ENCODE measurements at regions of chr5 and their contacts with region 1.

Region 1: DNA sequence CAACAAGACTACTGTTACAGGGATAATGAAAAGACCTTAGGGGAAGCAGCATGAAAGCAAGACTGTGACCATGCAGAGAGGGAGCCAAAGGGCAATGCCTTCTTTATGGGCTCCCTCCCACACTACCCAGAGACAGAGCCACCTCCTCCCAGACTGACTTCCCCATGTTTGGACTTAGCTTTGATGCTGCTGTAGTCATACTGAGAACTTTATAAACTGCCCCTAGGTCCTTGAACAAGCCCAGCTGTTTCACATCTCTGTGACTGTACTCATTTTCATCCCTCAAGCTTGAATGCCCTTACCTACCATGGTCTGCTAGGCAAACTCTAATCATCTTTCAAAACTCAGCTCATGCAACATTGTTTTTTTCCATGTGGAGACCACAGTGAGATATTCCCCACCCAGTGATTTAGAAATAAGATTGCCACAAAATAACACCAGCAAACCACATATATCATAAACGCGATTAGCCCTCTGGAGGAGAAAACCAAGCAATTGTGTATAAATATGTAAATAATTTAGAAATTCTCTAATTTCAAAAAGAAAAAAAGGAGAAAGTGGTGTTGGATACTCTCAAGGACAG is 23.4 kb upstream of the FAM169A start:
- DNase-seq: no peak
- ATAC-seq: peak; percentile 76
- H3K4me3 ChIP-seq: no peak overlapping the region
- H3K27ac ChIP-seq: peak overlapping the region; percentile 38
- H3K4me1 ChIP-seq: peaks cover 35% of the 10 kb centered on the region
- H3K27me3 ChIP-seq: no peaks in the 10 kb centered on the region
- CTCF ChIP-seq: no peak
- EP300 ChIP-seq: no peak
- POLR2A ChIP-seq: no peak
- RAD21 ChIP-seq: no peak

Region 2: DNA sequence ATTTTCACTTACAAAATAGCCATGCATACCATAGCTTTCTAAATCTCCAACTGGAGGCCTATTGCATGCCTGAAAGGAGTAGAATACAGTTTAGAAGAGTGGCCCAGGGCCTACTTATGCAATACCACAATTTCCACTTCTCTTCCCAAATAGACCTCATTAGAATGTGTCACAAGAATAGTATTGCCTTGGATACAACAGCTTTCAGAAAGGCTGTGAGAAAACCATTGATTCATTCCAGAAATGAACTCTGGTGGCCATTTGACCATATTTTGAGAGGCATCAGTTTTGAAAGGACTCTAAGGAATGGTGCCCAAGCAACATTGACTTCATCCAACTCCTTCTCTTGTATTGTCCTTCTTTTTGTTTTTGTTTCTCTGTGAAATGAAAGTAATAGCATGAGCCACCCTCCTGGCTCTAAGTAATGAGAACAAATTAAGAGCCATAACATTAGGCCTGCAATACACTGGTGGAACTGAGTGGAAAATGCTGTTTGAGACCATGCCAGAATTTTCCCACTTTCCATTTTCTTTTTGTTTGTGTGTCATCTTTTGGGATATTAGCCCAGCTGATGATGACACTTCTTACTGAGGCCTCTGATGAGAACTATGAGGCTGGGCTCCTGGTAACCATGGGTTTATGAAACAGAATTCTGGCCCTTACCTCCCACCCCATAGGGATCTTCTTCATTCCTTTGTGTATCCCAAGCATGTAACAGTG is 1626.5 kb before region 1 on chr5:
- CTCF ChIA-PET with region 1: no interaction called
- POLR2A ChIA-PET with region 1: no interaction called
- in situ Hi-C with region 1: no loop called
- intact Hi-C with region 1: no loop called
- DNase-seq: no peak
- ATAC-seq: no peak
- H3K4me3 ChIP-seq: no peak overlapping the region
- H3K27ac ChIP-seq: no peak overlapping the region
- H3K4me1 ChIP-seq: no peaks in the 10 kb centered on the region
- H3K27me3 ChIP-seq: peaks cover 0 to 37% of the 10 kb centered on the region in 2 experiments
- CTCF ChIP-seq: no peak
- EP300 ChIP-seq: no peak
- POLR2A ChIP-seq: no peak
- RAD21 ChIP-seq: no peak

Region 3: DNA sequence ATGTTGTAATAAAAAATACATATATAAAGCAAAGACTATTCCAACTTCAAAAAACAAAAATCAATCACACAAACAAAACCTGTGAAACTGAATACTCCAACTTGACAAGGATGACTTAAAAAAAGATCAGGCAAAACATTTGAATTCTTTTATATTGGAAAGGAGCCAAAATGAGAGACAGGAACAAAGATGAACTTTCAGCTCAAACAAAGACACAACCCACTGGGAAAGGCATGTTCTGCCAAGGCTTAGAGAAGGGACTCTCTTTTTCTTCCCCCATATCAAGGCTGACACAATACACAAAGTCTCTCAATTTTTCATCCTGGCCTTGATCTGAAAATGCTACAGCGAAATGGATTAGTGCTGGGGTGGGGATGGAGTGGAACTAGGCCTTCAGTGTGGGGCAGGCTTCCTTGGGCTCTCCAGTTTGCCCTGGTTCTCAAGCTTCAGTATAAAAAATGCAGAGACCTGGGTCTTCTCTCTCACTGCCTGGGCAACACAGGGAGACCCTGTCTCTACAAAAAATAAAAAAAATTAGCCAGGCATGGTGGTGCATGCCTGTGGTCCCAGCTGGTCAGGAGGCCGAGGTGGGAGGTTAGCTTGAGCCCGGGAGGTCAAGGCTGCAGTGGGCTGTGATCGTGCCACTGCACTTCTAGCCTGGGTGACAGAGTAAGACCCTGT is 11.8 kb before region 1 on chr5:
- CTCF ChIA-PET with region 1: no interaction called
- POLR2A ChIA-PET with region 1: interaction called, 12 read pairs
- in situ Hi-C with region 1: no loop called
- intact Hi-C with region 1: no loop called
- DNase-seq: peak; percentile 90
- ATAC-seq: peak; percentile 77
- H3K4me3 ChIP-seq: peak overlapping the region in 2 of 3 experiments; percentile 14 to 42; a peak in 4 of 6 replicates
- H3K27ac ChIP-seq: peak overlapping the region; percentile 96
- H3K4me1 ChIP-seq: peaks cover 74% of the 10 kb centered on the region
- H3K27me3 ChIP-seq: no peaks in the 10 kb centered on the region
- CTCF ChIP-seq: no peak
- EP300 ChIP-seq: peak in 1 of 2 experiments; percentile 93; a peak in 2 of 4 replicates
- POLR2A ChIP-seq: peak; percentile 24 to 36; a peak in 1 of 4 replicates
- RAD21 ChIP-seq: no peak

Measured in HepG2 (cell line).